ENCODE measurements at regions of chr2 and their contacts with region 1.

Region 1: DNA sequence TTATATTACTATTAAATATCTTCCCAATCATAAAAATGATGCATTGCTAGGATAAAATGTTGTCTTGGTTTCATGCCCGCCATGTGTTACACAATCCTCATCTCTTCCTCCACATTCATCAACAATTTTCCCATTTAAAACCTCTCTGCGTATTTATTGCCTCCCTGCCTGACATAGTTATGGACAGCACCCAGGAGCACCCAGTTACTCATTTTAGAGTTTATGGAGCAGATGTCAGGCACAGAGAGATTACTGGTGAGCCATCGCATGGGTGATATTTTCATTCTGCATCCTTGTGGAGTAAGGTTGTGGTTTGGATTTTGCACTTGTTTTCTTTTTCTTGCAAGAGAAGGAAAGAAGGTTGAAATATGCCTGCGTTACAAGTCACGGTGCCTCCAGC is 116.7 kb upstream of the NPAS2 start:
- DNase-seq: no peak
- H3K4me3 ChIP-seq: no peak overlapping the region
- H3K27ac ChIP-seq: no peak overlapping the region
- H3K4me1 ChIP-seq: no peaks in the 10 kb centered on the region
- H3K27me3 ChIP-seq: no peaks in the 10 kb centered on the region
- CTCF ChIP-seq: no peak

Region 2: DNA sequence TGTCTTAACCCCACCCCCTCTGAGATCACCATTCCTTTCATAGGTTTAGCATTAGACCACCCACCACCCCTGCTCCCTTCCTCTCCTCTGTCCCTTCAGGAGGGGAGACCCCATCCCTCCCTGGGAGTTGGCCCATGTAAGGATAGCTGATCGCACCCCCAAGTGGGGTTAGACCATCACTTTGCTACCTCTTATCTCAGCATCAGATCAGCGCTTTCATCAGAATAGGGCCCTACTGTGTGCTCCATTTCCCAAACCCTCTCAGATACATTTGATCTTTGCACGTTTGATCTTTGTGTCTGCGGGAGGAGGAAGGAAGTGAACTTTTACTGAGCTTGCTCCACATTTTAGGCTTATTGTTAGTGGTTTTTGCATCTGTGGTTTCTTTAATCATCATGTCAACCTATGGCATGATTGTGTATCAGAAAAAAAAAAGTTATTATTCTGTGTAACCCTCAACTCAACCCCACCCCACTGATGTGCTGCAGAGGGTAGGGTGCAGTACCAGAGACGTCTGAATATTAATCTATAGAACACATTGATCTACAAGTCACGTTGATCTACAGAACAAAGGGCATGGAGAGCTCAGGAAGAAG is 59.2 kb before region 1 on chr2:
- CTCF ChIA-PET with region 1: no interaction called
- POLR2A ChIA-PET with region 1: interaction called, 10 read pairs
- intact Hi-C with region 1: no loop called
- DNase-seq: no peak
- H3K4me3 ChIP-seq: no peak overlapping the region
- H3K27ac ChIP-seq: no peak overlapping the region
- H3K4me1 ChIP-seq: 0 out of 2 replicates have a peak, but pooled peaks cover 5% of the 10 kb centered on the region
- H3K27me3 ChIP-seq: no peaks in the 10 kb centered on the region
- CTCF ChIP-seq: no peak